A673 (cell line): ENCODE measurements at regions of chr10 and their contacts with region 1.

Region 1: DNA sequence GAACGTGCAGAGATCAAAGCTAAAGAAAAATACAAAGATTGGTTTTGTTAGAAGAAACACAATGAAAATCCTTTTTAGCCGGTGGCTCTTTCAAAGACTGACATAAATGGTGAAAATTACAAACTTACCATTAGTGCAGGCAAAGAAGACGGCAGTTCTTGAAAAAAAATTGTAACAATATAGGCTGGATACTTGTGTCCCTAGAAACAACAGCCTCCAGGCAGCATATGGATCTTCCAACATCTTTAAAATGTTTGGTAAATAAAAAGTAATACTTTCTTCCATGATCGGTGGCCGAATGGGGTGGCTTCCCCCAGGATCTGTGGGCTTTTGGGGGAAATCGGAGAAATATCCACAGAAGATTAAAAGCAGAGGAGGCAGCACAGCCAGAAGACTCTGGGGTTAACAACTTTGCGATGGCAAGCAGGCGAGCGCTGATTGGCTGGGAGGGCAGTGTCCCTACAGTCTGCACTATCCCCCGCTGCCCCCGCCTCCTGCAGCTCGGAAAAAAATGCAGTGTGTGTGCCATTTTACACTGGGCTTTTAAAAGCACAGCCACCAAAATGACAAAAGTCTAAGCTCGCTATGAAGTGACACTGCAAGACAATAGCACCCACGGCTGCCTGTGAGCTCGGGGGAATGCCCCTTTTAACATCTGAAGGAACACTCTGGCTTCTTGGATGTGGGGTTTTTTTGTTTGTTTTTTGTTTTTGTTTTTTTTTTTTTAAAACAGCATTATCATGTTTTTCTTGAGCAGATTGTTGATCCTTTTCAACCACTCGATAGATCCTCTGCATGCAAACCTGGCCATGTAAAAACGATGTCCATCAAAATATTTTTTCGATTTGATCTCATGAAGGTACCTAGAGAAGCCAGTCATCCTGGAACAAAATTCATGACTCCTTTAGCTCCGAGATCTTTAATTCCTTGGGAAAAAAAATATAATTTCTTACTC is 31.7 kb upstream of the EPC1 start:
- DNase-seq: peak; percentile 98
- H3K4me3 ChIP-seq: peak overlapping the region; percentile 76
- H3K27ac ChIP-seq: peak overlapping the region; percentile 98
- H3K4me1 ChIP-seq: peaks cover 25% of the 10 kb centered on the region
- H3K27me3 ChIP-seq: no peaks in the 10 kb centered on the region
- CTCF ChIP-seq: no peak

Region 2: GRCh38 chr10:31819391-31819820 is 559.2 kb before region 1 on chr10:
- CTCF ChIA-PET with region 1: no interaction called
- POLR2A ChIA-PET with region 1: no interaction called
- intact Hi-C with region 1: no loop called
- DNase-seq: no peak
- H3K4me3 ChIP-seq: no peak overlapping the region
- H3K27ac ChIP-seq: no peak overlapping the region
- H3K4me1 ChIP-seq: peaks cover 4% of the 10 kb centered on the region
- H3K27me3 ChIP-seq: no peaks in the 10 kb centered on the region
- CTCF ChIP-seq: no peak

Region 3: GRCh38 chr10:32298054-32298812 is 80.4 kb before region 1 on chr10:
- CTCF ChIA-PET with region 1: no interaction called
- POLR2A ChIA-PET with region 1: no interaction called
- intact Hi-C with region 1: no loop called
- DNase-seq: no peak
- H3K4me3 ChIP-seq: no peak overlapping the region
- H3K27ac ChIP-seq: no peak overlapping the region
- H3K4me1 ChIP-seq: peaks cover 15% of the 10 kb centered on the region
- H3K27me3 ChIP-seq: no peaks in the 10 kb centered on the region
- CTCF ChIP-seq: no peak

Region 4: GRCh38 chr10:32400961-32401360 is 22.3 kb after region 1 on chr10:
- CTCF ChIA-PET with region 1: no interaction called
- POLR2A ChIA-PET with region 1: interaction called, 4 read pairs
- intact Hi-C with region 1: loop called (anchors 2 kb)
- DNase-seq: peak; percentile 96
- H3K4me3 ChIP-seq: no peak overlapping the region
- H3K27ac ChIP-seq: peak overlapping the region; percentile 97
- H3K4me1 ChIP-seq: peaks cover 22% of the 10 kb centered on the region
- H3K27me3 ChIP-seq: no peaks in the 10 kb centered on the region
- CTCF ChIP-seq: no peak

Region 5: DNA sequence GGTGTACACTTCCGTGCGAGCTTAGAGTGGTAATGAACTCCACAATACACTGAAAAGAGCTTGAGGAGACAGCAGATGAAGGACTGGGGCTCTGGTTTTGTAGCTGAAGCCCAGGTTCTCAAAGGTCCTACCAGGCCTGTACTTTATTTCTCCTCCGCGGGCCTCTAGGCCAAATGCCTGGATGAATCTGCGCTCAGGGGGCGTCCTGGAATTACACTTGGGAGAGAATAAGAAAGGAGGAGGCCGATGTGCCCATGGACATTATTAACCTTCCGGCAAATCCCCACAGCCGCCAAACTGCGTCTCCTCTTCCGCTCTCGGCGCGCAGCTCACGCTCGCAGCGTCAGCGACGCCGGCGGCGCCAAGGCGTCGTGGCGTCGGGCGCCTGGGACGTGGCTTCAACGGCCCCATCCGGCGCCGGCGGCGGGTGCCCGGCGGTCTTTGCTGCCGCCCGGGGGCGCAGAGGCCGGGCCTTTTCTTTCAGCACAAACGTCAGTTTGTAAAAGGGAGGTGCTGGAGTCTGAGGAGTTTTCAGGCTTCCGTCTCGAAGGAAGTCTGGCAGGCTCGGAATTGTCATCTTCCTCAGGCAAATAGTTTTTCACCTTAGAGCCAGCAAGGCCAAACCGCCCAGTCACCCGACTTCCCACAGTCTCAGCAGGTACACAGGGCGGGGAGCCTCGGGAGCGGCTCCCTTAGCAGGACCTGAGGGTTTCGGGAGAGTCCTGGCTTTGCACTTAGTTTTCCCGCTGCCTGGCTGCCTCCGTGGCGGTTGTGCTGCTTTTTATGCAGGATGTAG is 67.3 kb after region 1 on chr10 and contains the start of gene CCDC7:
- CTCF ChIA-PET with region 1: no interaction called
- POLR2A ChIA-PET with region 1: interaction called, 6 read pairs
- intact Hi-C with region 1: loop called (anchors 2 kb)
- DNase-seq: peak; percentile 97
- H3K4me3 ChIP-seq: peak within 1 kb of the TSS; percentile 64
- H3K27ac ChIP-seq: peak within 1 kb of the TSS; percentile 96
- H3K4me1 ChIP-seq: peaks cover 6% of the 10 kb centered on the region
- H3K27me3 ChIP-seq: no peaks in the 10 kb centered on the region
- CTCF ChIP-seq: peak; percentile 55
- total RNA-seq, gene CCDC7: 12.5 and 16.4 TPM in 2 replicates